BJ (cell line): ENCODE measurements at regions of chr11 and their contacts with region 1.

Region 1: DNA sequence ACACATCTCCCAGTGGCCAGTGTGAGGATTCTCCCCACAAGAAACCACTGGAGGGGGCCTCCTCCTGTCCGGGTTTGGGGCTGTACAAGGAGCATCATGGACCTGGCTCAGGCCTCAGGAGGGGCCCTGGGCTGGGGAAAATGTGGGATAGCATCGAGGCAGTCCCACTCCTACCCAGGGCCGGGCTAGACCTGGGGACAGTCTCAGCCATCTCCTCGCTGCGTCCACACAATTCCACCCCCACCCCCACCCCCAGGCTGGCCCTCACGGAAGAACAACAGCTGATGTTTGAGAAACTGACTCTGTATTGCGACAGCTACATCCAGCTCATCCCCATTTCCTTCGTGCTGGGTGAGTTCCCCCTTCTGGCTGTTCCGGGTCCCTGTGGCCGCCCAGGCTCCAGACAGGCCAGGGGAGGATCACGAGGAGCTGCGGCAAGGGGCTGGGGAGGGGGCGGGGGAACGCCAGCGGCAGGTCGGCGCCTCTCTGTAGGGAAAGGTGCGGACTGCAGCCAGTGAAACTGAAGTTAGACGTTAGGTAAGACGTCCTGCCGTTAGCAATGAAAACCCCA is 4.8 kb downstream of the BEST1 start:
- DNase-seq: peak; percentile 48
- H3K4me3 ChIP-seq: peak overlapping the region; percentile 47
- H3K27me3 ChIP-seq: no peaks in the 10 kb centered on the region
- CTCF ChIP-seq: peak; percentile 51

Region 2: DNA sequence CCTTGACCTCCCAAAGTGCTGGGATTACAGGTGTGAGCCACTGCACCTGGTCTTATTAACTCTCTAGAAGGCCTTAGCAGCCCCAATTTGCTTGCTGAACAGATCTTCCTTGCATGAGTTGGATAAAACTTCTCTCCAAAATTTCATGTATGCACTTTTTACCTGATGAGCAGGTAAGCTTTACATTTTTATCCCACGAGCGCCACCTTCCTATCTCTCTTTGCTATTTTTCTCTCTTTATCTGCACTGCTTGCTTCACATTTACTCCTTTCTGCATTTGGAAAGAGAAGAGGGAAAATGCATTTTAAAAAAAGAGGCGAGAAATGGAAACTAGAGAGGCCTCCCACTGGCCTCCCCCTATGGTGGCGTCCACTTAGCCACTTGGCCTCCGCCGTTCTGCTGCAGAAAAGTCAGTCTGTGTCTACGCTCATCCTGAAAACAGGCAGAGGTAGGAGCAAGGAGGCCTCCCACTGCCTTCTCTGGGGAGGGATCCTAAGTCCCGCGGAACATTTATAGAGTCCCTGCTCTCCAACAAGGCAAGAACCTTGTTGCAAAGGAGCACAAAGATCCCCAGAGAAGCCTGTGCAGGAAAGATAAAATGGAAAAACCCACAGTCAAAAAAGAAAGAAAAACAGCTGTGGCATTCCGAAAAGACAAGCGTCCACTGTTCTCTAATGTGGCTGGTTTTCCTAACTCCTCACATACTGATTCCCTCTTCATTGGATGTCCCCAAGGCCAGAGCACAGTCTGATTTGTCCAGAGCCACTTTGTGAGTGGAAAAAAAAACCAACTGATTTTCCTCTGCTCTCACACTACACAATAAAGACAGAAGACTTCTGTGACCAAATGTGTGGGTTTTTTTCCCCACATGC is 106.7 kb after region 1 on chr11:
- CTCF ChIA-PET with region 1: no interaction called
- POLR2A ChIA-PET with region 1: interaction called, 12 read pairs
- DNase-seq: no peak
- H3K4me3 ChIP-seq: no peak overlapping the region
- H3K27me3 ChIP-seq: peaks cover 3% of the 10 kb centered on the region; the same call in 1 of the 2 replicates
- CTCF ChIP-seq: no peak